ENCODE measurements at regions of chr17 and their contacts with region 1.

Region 1: GRCh38 chr17:63842540-63843386 is at the start of gene SMARCD2:
- DNase-seq: peak; percentile 98 to 99 (median 99)
- H3K4me3 ChIP-seq: peak within 1 kb of the TSS; percentile 100
- H3K27ac ChIP-seq: peak within 1 kb of the TSS; percentile 72 to 88
- H3K4me1 ChIP-seq: peaks cover 25% of the 10 kb centered on the region
- H3K27me3 ChIP-seq: no peaks in the 10 kb centered on the region
- CTCF ChIP-seq: peak in 2 of 3 donors; percentile 27 to 73
- EP300 ChIP-seq: peak; percentile 62
- POLR2A ChIP-seq: peak; percentile 96
- total RNA-seq, gene SMARCD2: 46.2 to 117 (median 72.9) TPM

Region 2: GRCh38 chr17:63798572-63799106 is 44.1 kb before region 1 on chr17:
- intact Hi-C with region 1: no loop called
- DNase-seq: no peak
- H3K4me3 ChIP-seq: no peak overlapping the region
- H3K27ac ChIP-seq: no peak overlapping the region
- H3K4me1 ChIP-seq: no peaks in the 10 kb centered on the region
- H3K27me3 ChIP-seq: no peaks in the 10 kb centered on the region
- CTCF ChIP-seq: no peak
- EP300 ChIP-seq: no peak
- POLR2A ChIP-seq: no peak

Region 3: GRCh38 chr17:63827002-63827771 is 15.6 kb before region 1 on chr17 and contains the starts of genes FTSJ3 and PSMC5:
- intact Hi-C with region 1: loop called in 1 of 4 experiments (anchors 2 kb)
- DNase-seq: peak; percentile 91 to 96 (median 93)
- H3K4me3 ChIP-seq: peak within 1 kb of the TSS; percentile 66
- H3K27ac ChIP-seq: peak within 1 kb of the TSS; percentile 75 to 95
- H3K4me1 ChIP-seq: peaks cover 3% of the 10 kb centered on the region
- H3K27me3 ChIP-seq: no peaks in the 10 kb centered on the region
- CTCF ChIP-seq: peak in 2 of 3 donors; percentile 20 to 66
- EP300 ChIP-seq: no peak
- POLR2A ChIP-seq: peak; percentile 84
- total RNA-seq, gene FTSJ3: 26.1 to 46.5 (median 34.7) TPM
- total RNA-seq, gene PSMC5: 36.4 to 111 (median 83.8) TPM

Region 4: GRCh38 chr17:64020056-64020766 is 177.4 kb after region 1 on chr17 and contains the start of gene ICAM2:
- intact Hi-C with region 1: no loop called
- DNase-seq: peak in 1 of 5 donors; percentile 57
- H3K4me3 ChIP-seq: peak within 1 kb of the TSS; percentile 22
- H3K27ac ChIP-seq: no peak within 1 kb of the TSS
- H3K4me1 ChIP-seq: peaks cover 3% of the 10 kb centered on the region
- H3K27me3 ChIP-seq: no peaks in the 10 kb centered on the region
- CTCF ChIP-seq: no peak
- EP300 ChIP-seq: no peak
- POLR2A ChIP-seq: no peak
- total RNA-seq, gene ICAM2: 6.8 to 29.0 (median 17.4) TPM